ENCODE measurements at regions of chr11 and their contacts with region 1.

Region 1: GRCh38 chr11:94731880-94732601 is 36.1 kb upstream of the AMOTL1 start:
- DNase-seq: peak in 1 of 2 donors; percentile 31
- ATAC-seq: peak; percentile 66 to 89 (median 84)
- H3K4me3 ChIP-seq: no peak overlapping the region
- H3K27ac ChIP-seq: peak overlapping the region; percentile 55 to 85 (median 74)
- H3K4me1 ChIP-seq: peaks cover 8 to 47% (median 41%) of the 10 kb centered on the region in 9 donors
- H3K27me3 ChIP-seq: no peaks in the 10 kb centered on the region
- CTCF ChIP-seq: no peak

Region 2: GRCh38 chr11:94650756-94651155 is 81.3 kb before region 1 on chr11:
- intact Hi-C with region 1: loop called in 2 of 10 experiments (anchors 5 to 10 kb)
- DNase-seq: peak; percentile 62 to 70
- ATAC-seq: peak in 7 of 8 donors; percentile 67 to 85 (median 83)
- H3K4me3 ChIP-seq: no peak overlapping the region
- H3K27ac ChIP-seq: peak overlapping the region in 6 of 10 donors; percentile 36 to 61 (median 44)
- H3K4me1 ChIP-seq: peaks cover 0 to 21% (median 8%) of the 10 kb centered on the region in 9 donors
- H3K27me3 ChIP-seq: no peaks in the 10 kb centered on the region
- CTCF ChIP-seq: no peak

Region 3: GRCh38 chr11:94656968-94657367 is 75.1 kb before region 1 on chr11:
- intact Hi-C with region 1: loop called in 2 of 10 experiments (anchors 5 to 10 kb)
- DNase-seq: no peak
- ATAC-seq: no peak
- H3K4me3 ChIP-seq: no peak overlapping the region
- H3K27ac ChIP-seq: no peak overlapping the region
- H3K4me1 ChIP-seq: peaks cover 0 to 18% (median 5%) of the 10 kb centered on the region in 9 donors
- H3K27me3 ChIP-seq: no peaks in the 10 kb centered on the region
- CTCF ChIP-seq: no peak

Measured in heart right ventricle (tissue), 16 donors.